A673 (cell line): ENCODE measurements at regions of chr1 and their contacts with region 1.

Region 1: DNA sequence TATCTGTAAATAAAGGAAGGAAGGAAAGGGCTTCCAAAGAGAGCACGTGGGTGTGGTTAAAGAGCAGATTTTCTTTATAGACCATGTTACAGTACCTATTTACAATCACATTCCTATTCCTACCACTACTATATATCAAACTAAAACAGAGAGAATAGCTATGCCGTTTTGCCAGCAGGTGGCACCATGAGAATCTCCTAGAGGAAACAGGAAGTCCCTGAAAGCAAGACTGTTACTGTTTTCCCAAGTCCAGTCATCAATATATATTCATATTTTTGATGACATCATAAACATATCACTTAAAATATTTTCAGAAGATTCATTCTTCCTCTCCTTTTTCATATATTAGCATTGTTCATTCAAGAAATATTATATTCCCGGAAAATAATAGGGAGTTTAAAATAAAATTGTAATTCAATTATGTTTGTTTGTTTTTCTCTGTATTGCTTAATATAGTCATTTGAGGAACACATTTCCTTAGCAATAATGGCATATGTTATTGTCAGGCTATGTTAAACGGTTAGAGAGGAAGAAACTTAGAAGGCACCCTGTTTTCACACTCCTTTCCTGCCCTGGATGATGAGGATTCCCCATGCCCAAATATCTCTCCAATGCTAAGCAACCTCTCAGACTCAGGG is 6.6 kb downstream of the CCDC190 start:
- DNase-seq: peak; percentile 88
- H3K4me3 ChIP-seq: no peak overlapping the region
- H3K27ac ChIP-seq: peak overlapping the region; percentile 43
- H3K4me1 ChIP-seq: peaks cover 25% of the 10 kb centered on the region
- H3K27me3 ChIP-seq: no peaks in the 10 kb centered on the region
- CTCF ChIP-seq: peak; percentile 95

Region 2: GRCh38 chr1:162835157-162835899 is 19.0 kb before region 1 on chr1:
- CTCF ChIA-PET with region 1: interaction called, 3 read pairs
- POLR2A ChIA-PET with region 1: interaction called, 30 read pairs
- intact Hi-C with region 1: no loop called
- DNase-seq: no peak
- H3K4me3 ChIP-seq: no peak overlapping the region
- H3K27ac ChIP-seq: no peak overlapping the region
- H3K4me1 ChIP-seq: peaks cover 7% of the 10 kb centered on the region
- H3K27me3 ChIP-seq: no peaks in the 10 kb centered on the region
- CTCF ChIP-seq: no peak

Region 3: GRCh38 chr1:163315773-163316374 is 461.5 kb after region 1 on chr1:
- CTCF ChIA-PET with region 1: interaction called, 5 read pairs
- POLR2A ChIA-PET with region 1: no interaction called
- intact Hi-C with region 1: loop called (anchors 1 kb)
- DNase-seq: peak; percentile 62
- H3K4me3 ChIP-seq: no peak overlapping the region
- H3K27ac ChIP-seq: no peak overlapping the region
- H3K4me1 ChIP-seq: peaks cover 4% of the 10 kb centered on the region
- H3K27me3 ChIP-seq: no peaks in the 10 kb centered on the region
- CTCF ChIP-seq: peak; percentile 87